CD4-positive, alpha-beta T cell (primary cell): ENCODE measurements at regions of chr16 and their contacts with region 1.

Region 1: DNA sequence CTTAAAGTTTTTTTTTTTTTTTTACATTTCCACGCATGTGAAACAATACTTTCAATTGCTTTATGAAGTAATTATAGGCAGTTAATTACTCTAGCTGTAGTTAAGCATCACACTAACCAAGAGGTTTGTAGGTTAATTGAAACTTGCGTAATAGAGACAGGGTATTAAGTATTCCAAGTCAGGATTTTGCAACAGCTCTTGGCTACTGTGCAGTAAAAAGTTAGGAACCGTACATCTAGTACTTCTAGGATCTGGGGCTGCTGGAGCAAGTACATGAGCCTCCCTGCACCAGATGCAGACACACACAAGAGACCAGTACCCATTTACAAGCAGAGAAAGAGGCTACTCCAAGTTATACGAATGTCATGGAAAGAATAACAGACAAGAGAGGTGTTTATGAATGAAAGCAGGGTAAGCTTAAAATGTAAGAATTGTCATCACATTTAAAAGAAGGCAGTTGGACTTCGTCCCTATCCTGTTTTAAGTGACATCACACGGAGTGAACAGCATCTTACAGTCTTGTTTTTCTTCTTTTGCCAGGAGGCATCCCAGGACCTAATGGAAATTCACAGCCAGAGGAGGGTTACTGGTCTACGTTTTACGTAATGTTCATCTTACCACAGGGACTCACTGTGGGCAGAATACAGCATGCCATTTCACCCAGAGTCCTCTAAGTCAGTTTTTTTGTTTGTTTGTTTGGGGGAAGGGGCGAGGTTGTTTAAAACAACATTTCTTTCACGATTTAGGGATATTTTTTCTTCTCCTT is 379.6 kb upstream of the PSMD7 start:
- DNase-seq: no peak
- ATAC-seq: no peak
- H3K4me3 ChIP-seq: no peak overlapping the region
- H3K4me3 Mint-ChIP-seq: no peak overlapping the region
- H3K27ac ChIP-seq: no peak overlapping the region
- H3K27ac Mint-ChIP-seq: no peak overlapping the region
- H3K4me1 ChIP-seq: no peaks in the 10 kb centered on the region
- H3K4me1 Mint-ChIP-seq: no peaks in the 10 kb centered on the region
- H3K27me3 ChIP-seq: no peaks in the 10 kb centered on the region
- H3K27me3 Mint-ChIP-seq: peaks cover 9% of the 10 kb centered on the region
- CTCF ChIP-seq: no peak

Region 2: GRCh38 chr16:73864868-73865267 is 52.1 kb before region 1 on chr16:
- CTCF ChIA-PET with region 1: no interaction called
- POLR2A ChIA-PET with region 1: no interaction called
- intact Hi-C with region 1: loop called in 1 of 2 experiments (anchors 5 kb)
- DNase-seq: no peak
- ATAC-seq: no peak
- H3K4me3 ChIP-seq: no peak overlapping the region
- H3K4me3 Mint-ChIP-seq: no peak overlapping the region
- H3K27ac ChIP-seq: no peak overlapping the region
- H3K27ac Mint-ChIP-seq: no peak overlapping the region
- H3K4me1 ChIP-seq: no peaks in the 10 kb centered on the region
- H3K4me1 Mint-ChIP-seq: no peaks in the 10 kb centered on the region
- H3K27me3 ChIP-seq: no peaks in the 10 kb centered on the region
- H3K27me3 Mint-ChIP-seq: peaks cover 2% of the 10 kb centered on the region
- CTCF ChIP-seq: no peak